ENCODE measurements at regions of chr1 and their contacts with region 1.

Region 1: GRCh38 chr1:193183019-193183627 is 3.3 kb downstream of the B3GALT2 start:
- DNase-seq: peak; percentile 27 to 63 (median 38)
- ATAC-seq: peak; percentile 70
- H3K4me3 ChIP-seq: no peak overlapping the region
- H3K27ac ChIP-seq: no peak overlapping the region
- H3K4me1 ChIP-seq: no peaks in the 10 kb centered on the region; a peak in 1 of 5 replicates
- H3K27me3 ChIP-seq: no peaks in the 10 kb centered on the region
- CTCF ChIP-seq: peak; percentile 48 to 81 (median 51); a peak in 4 of 6 replicates
- EP300 ChIP-seq: no peak
- POLR2A ChIP-seq: no peak
- RAD21 ChIP-seq: peak; percentile 63 to 66

Region 2: DNA sequence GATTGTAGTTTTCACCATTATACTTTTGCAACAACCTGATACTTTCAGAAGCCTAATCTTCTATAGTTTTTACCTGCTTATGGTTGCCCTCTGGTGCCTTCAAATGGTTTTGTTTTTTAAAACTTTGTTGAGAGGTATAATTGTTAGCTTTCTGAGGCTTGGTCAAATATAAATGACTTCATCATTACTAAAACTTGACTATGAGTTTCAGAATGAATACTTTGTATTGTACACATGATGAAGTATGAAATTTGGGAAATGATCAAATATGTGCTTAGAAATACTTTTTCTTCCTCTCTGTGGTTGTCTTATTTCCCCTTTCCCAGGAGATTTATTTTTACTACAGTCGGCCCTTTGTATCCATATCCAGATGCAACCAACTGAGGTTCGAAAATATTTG is 155.1 kb after region 1 on chr1:
- CTCF ChIA-PET with region 1: interaction called, 3 read pairs
- POLR2A ChIA-PET with region 1: no interaction called
- in situ Hi-C with region 1: no loop called
- intact Hi-C with region 1: loop called (anchors 5 kb)
- DNase-seq: no peak
- ATAC-seq: peak; percentile 49; the same call in 1 of the 3 replicates
- H3K4me3 ChIP-seq: no peak overlapping the region
- H3K27ac ChIP-seq: no peak overlapping the region
- H3K4me1 ChIP-seq: no peaks in the 10 kb centered on the region
- H3K27me3 ChIP-seq: no peaks in the 10 kb centered on the region
- CTCF ChIP-seq: 0 out of 6 replicates have a peak, but pooled peaks of 1 of the 3 experiments have one; percentile 11
- EP300 ChIP-seq: no peak
- POLR2A ChIP-seq: no peak
- RAD21 ChIP-seq: peak in 1 of 2 experiments; percentile 39; a peak in 2 of 4 replicates

Region 3: DNA sequence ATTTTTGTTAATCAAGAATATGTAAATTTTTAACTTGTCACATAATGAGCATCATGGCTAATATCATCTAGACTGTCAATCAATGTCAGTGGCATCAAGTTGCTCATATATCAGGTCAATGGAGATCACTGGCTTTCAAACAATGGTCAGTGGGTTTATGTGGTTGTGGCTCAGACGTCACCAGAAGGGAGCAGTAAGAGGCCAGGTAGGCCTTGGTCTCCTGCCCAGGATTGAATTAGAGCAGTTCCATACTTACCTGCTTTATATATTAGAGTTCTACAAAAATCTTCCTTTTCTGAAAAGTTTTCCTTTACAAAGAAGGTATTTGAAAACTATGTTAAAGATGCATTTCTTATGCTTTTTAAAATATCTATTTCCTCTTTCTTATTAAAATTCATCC is 209.6 kb after region 1 on chr1:
- CTCF ChIA-PET with region 1: no interaction called
- POLR2A ChIA-PET with region 1: no interaction called
- in situ Hi-C with region 1: no loop called
- intact Hi-C with region 1: loop called (anchors 10 kb)
- DNase-seq: no peak
- ATAC-seq: no peak
- H3K4me3 ChIP-seq: no peak overlapping the region
- H3K27ac ChIP-seq: no peak overlapping the region
- H3K4me1 ChIP-seq: no peaks in the 10 kb centered on the region; a peak in 1 of 5 replicates
- H3K27me3 ChIP-seq: no peaks in the 10 kb centered on the region
- CTCF ChIP-seq: no peak
- EP300 ChIP-seq: no peak
- POLR2A ChIP-seq: no peak
- RAD21 ChIP-seq: no peak

Measured in K562 (cell line).